ENCODE measurements at regions of chr7 and their contacts with region 1.

Region 1: GRCh38 chr7:55415173-55415778 is 50.1 kb downstream of the LANCL2 start:
- DNase-seq: no peak

Region 2: GRCh38 chr7:54773472-54774399 is 641.5 kb before region 1 on chr7:
- intact Hi-C with region 1: loop called (anchors 5 kb)
- DNase-seq: peak; percentile 88

Region 3: DNA sequence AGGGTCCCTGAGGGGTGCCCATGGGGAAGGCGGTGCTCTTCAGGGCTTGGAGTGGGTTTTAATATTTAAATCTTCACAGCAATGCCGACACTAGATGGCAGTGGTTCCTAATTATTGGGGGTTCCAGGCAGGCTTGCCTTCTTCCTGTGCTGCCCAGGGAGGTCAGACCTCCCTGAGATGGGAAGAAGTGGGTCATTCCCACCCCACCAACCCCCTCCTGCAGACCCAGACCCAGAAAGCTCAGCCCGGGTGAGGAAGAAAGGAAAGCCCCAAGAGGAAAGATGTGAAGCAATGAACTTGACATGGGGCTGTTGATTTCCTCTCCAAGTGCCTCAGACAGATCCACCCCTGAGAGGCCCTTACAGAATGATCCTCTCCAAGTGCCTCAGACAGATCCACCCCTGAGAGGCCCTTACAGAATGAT is 135.2 kb before region 1 on chr7:
- intact Hi-C with region 1: loop called (anchors 1 kb)
- DNase-seq: no peak